A673 (cell line): ENCODE measurements at regions of chr15 and their contacts with region 1.

Region 1: GRCh38 chr15:96356494-96357455 is 26.3 kb downstream of the NR2F2 start:
- DNase-seq: peak; percentile 92
- H3K4me3 ChIP-seq: peak overlapping the region; percentile 60
- H3K27ac ChIP-seq: peak overlapping the region; percentile 93
- H3K4me1 ChIP-seq: peaks cover 70% of the 10 kb centered on the region
- H3K27me3 ChIP-seq: no peaks in the 10 kb centered on the region
- CTCF ChIP-seq: peak; percentile 97

Region 2: GRCh38 chr15:96416934-96417759 is 60.4 kb after region 1 on chr15:
- CTCF ChIA-PET with region 1: no interaction called
- POLR2A ChIA-PET with region 1: no interaction called
- intact Hi-C with region 1: loop called (anchors 5 kb)
- DNase-seq: peak; percentile 58
- H3K4me3 ChIP-seq: peak overlapping the region; percentile 50
- H3K27ac ChIP-seq: peak overlapping the region; percentile 53
- H3K4me1 ChIP-seq: peaks cover 30% of the 10 kb centered on the region
- H3K27me3 ChIP-seq: no peaks in the 10 kb centered on the region
- CTCF ChIP-seq: no peak

Region 3: GRCh38 chr15:96585484-96586386 is 229.0 kb after region 1 on chr15:
- CTCF ChIA-PET with region 1: no interaction called
- POLR2A ChIA-PET with region 1: no interaction called
- intact Hi-C with region 1: loop called (anchors 2 kb)
- DNase-seq: peak; percentile 70
- H3K4me3 ChIP-seq: no peak overlapping the region
- H3K27ac ChIP-seq: no peak overlapping the region
- H3K4me1 ChIP-seq: peaks cover 35% of the 10 kb centered on the region
- H3K27me3 ChIP-seq: no peaks in the 10 kb centered on the region
- CTCF ChIP-seq: peak; percentile 72

Region 4: GRCh38 chr15:96693990-96694517 is 337.3 kb after region 1 on chr15:
- CTCF ChIA-PET with region 1: no interaction called
- POLR2A ChIA-PET with region 1: no interaction called
- intact Hi-C with region 1: loop called (anchors 5 kb)
- DNase-seq: peak; percentile 89
- H3K4me3 ChIP-seq: peak overlapping the region; percentile 3
- H3K27ac ChIP-seq: peak overlapping the region; percentile 72
- H3K4me1 ChIP-seq: peaks cover 56% of the 10 kb centered on the region
- H3K27me3 ChIP-seq: no peaks in the 10 kb centered on the region
- CTCF ChIP-seq: no peak

Region 5: GRCh38 chr15:97072545-97072944 is 715.8 kb after region 1 on chr15:
- CTCF ChIA-PET with region 1: no interaction called
- POLR2A ChIA-PET with region 1: no interaction called
- intact Hi-C with region 1: loop called (anchors 2 kb)
- DNase-seq: no peak
- H3K4me3 ChIP-seq: no peak overlapping the region
- H3K27ac ChIP-seq: peak overlapping the region; percentile 72
- H3K4me1 ChIP-seq: peaks cover 56% of the 10 kb centered on the region
- H3K27me3 ChIP-seq: no peaks in the 10 kb centered on the region
- CTCF ChIP-seq: no peak